ENCODE measurements at regions of chr17 and their contacts with region 1.

Region 1: GRCh38 chr17:31900877-31901276 is 631 bp downstream of the UTP6 start:
- DNase-seq: no peak
- ATAC-seq: no peak
- H3K4me3 ChIP-seq: peak overlapping the region; percentile 70 to 91 (median 77)
- H3K27ac ChIP-seq: peak overlapping the region; percentile 68 to 87 (median 82)
- H3K4me1 ChIP-seq: peaks cover 11 to 16% of the 10 kb centered on the region in 2 donors
- H3K27me3 ChIP-seq: no peaks in the 10 kb centered on the region
- CTCF ChIP-seq: no peak
- POLR2A ChIP-seq: no peak

Region 2: DNA sequence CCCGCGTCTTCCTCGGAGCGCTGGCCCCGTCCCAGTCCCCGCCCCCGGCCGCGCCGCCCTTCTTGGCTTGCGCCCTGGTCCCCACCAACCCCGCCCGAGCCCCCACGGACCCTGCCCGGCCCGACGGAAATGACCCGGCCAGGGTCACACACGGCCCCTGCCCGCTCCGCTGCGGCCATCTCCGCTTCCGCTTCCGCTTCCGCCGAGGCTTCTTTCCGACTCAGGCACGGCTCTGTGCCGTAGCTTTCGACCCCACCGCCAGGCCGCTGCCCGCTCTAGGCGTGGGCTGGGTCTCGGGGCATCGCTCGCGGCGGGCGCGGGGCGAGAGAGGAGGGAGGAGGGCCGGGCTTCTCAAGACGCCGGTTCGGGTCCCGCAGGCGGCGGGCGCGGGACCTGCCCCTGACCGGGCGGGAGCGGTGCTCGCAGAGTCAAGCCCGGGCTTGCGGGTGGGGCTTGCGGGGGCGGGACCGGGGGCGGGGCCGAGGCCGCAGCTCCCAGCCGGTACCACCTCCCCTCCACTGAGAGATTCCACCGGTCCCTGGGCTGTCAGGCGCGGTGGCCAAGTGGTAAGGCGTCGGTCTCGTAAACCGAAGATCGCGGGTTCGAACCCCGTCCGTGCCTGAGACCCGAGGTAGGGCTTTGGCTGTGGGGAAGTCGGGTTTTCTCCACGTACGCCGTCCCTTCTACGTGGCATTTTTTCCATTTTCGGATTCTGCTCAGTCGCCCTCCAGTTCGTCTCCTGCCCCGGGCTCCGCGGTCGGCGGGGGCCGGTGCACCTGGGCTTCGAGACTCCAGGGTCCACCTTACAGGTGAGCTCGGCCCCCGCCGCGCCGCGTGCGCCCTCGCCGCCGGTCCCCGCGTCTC is 351.1 kb before region 1 on chr17:
- in situ Hi-C with region 1: no loop called
- intact Hi-C with region 1: loop called (anchors 5 kb)
- DNase-seq: peak; percentile 83 to 85
- ATAC-seq: peak; percentile 92 to 93
- H3K4me3 ChIP-seq: peak overlapping the region; percentile 83 to 99 (median 94)
- H3K27ac ChIP-seq: peak overlapping the region; percentile 86 to 92 (median 91)
- H3K4me1 ChIP-seq: peaks cover 2 to 5% of the 10 kb centered on the region in 2 donors
- H3K27me3 ChIP-seq: no peaks in the 10 kb centered on the region
- CTCF ChIP-seq: no peak
- POLR2A ChIP-seq: peak; percentile 69 to 72

Region 3: GRCh38 chr17:31935512-31935911 is 34.6 kb after region 1 on chr17:
- in situ Hi-C with region 1: no loop called
- intact Hi-C with region 1: loop called (anchors 1 kb)
- DNase-seq: no peak
- ATAC-seq: no peak
- H3K4me3 ChIP-seq: no peak overlapping the region
- H3K27ac ChIP-seq: no peak overlapping the region
- H3K4me1 ChIP-seq: peaks cover 11 to 17% of the 10 kb centered on the region in 2 donors
- H3K27me3 ChIP-seq: no peaks in the 10 kb centered on the region
- CTCF ChIP-seq: no peak
- POLR2A ChIP-seq: no peak